Activated T-helper 1 cell treated with anti-CD3 and anti-CD28 coated beads, Interleukin-12 subunit alpha, Interleukin-12 subunit beta, Interleukin-2, Interleukin-4 antibody, amounts not matched to agents 30 ng/mL and 10 ng/mL and 1 ng/mL, durations not matched to agents 14 hours and 24 hours and 36 hours (primary cell): ENCODE measurements at regions of chr7 and their contacts with region 1.

Region 1: GRCh38 chr7:129952653-129953560 is at the start of gene UBE2H:
- DNase-seq: peak; percentile 83
- H3K4me3 Mint-ChIP-seq: peak within 1 kb of the TSS; percentile 98
- H3K27ac Mint-ChIP-seq: peak within 1 kb of the TSS; percentile 100
- H3K4me1 Mint-ChIP-seq: peaks cover 10% of the 10 kb centered on the region
- H3K27me3 Mint-ChIP-seq: peaks cover 20% of the 10 kb centered on the region
- total RNA-seq, gene UBE2H: 27.1 TPM in 2 replicates

Region 2: GRCh38 chr7:129224251-129225205 is 728.4 kb before region 1 on chr7 and contains the start of gene AHCYL2:
- intact Hi-C with region 1: loop called (anchors 1 kb)
- DNase-seq: peak; percentile 92
- H3K4me3 Mint-ChIP-seq: peak within 1 kb of the TSS; percentile 90
- H3K27ac Mint-ChIP-seq: peak within 1 kb of the TSS; percentile 87
- H3K4me1 Mint-ChIP-seq: peaks cover 31% of the 10 kb centered on the region
- H3K27me3 Mint-ChIP-seq: peaks cover 6% of the 10 kb centered on the region
- total RNA-seq, gene AHCYL2: 14.1 and 15.5 TPM in 2 replicates

Region 3: GRCh38 chr7:129530795-129531391 is 422.0 kb before region 1 on chr7:
- intact Hi-C with region 1: loop called (anchors 2 kb)
- DNase-seq: peak; percentile 8
- H3K4me3 Mint-ChIP-seq: no peak overlapping the region
- H3K27ac Mint-ChIP-seq: peak overlapping the region; percentile 79
- H3K4me1 Mint-ChIP-seq: peaks cover 12% of the 10 kb centered on the region
- H3K27me3 Mint-ChIP-seq: no peaks in the 10 kb centered on the region

Region 4: GRCh38 chr7:129906700-129907099 is 46.2 kb before region 1 on chr7:
- intact Hi-C with region 1: loop called (anchors 2 kb)
- DNase-seq: no peak
- H3K4me3 Mint-ChIP-seq: no peak overlapping the region
- H3K27ac Mint-ChIP-seq: no peak overlapping the region
- H3K4me1 Mint-ChIP-seq: peaks cover 38% of the 10 kb centered on the region
- H3K27me3 Mint-ChIP-seq: no peaks in the 10 kb centered on the region

Region 5: DNA sequence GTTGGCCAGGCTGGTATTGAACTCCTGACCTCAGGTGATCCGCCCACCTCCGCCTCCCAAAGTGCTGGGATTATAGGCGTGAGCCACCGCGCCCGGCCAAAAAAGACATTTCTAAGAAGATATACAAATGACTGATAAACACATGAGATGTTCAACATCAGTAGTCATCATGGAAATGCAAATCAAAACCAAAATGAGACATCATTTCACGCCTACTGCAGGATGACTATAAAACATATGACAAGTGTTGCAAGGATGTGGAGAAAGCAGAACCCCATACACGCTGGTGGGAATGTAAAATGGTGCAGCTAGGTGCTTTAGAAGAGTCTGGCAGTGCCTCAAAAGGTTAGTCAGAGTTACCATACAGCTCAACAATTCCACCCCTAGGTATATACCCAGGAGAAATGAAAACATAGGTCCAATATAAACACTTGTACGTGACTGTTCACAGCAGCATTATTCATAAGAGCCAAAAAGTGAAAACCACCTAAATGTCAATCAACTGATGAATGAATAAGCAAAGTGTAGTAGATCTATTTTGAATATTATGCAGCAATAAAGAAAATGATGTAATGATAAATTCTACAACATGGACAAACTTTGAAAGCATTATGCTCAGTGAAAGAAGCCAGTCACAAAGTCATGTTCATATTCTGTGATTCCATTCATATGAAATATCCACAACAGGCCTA is 227.8 kb after region 1 on chr7:
- intact Hi-C with region 1: loop called (anchors 2 kb)
- DNase-seq: no peak
- H3K4me3 Mint-ChIP-seq: peak overlapping the region; percentile 15
- H3K27ac Mint-ChIP-seq: peak overlapping the region; percentile 92
- H3K4me1 Mint-ChIP-seq: peaks cover 36% of the 10 kb centered on the region
- H3K27me3 Mint-ChIP-seq: no peaks in the 10 kb centered on the region